ENCODE measurements at regions of chr13 and their contacts with region 1.

Region 1: GRCh38 chr13:97109841-97110492 is 112.2 kb upstream of the MBNL2 start:
- DNase-seq: peak; percentile 92 to 93 (median 93)
- ATAC-seq: peak; percentile 99 to 100 (median 100)
- H3K4me3 ChIP-seq: no peak overlapping the region
- H3K27ac ChIP-seq: no peak overlapping the region
- H3K4me1 ChIP-seq: peaks cover 0 to 7% (median 0%) of the 10 kb centered on the region in 4 donors
- H3K27me3 ChIP-seq: no peaks in the 10 kb centered on the region
- CTCF ChIP-seq: peak; percentile 98 to 100 (median 99)
- POLR2A ChIP-seq: no peak

Region 2: GRCh38 chr13:96279904-96280303 is 830.1 kb before region 1 on chr13:
- intact Hi-C with region 1: no loop called
- DNase-seq: no peak
- ATAC-seq: no peak
- H3K4me3 ChIP-seq: no peak overlapping the region
- H3K27ac ChIP-seq: no peak overlapping the region
- H3K4me1 ChIP-seq: no peaks in the 10 kb centered on the region
- H3K27me3 ChIP-seq: no peaks in the 10 kb centered on the region
- CTCF ChIP-seq: no peak
- POLR2A ChIP-seq: no peak

Region 3: DNA sequence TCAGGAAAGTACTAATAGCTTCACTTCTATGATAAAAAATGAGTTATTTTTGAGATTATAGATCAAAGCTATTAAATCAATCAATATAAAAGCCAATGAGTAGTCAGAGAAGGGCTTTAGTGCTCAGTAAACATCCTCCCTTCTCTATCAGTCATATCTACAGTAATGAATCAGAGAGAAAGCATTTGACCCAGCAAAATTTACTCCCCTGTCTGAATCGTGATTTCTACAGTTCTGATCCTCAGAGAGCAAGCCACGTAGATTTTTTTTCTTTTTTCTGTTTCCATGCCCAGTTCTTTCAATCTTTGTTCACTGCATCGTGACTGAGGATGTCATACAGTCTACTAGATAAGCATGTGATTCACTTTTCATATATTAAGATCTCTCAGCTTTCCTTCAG is 96.0 kb after region 1 on chr13:
- intact Hi-C with region 1: loop called in 1 of 2 experiments (anchors 10 kb)
- DNase-seq: no peak
- ATAC-seq: peak in 1 of 4 donors; percentile 33
- H3K4me3 ChIP-seq: no peak overlapping the region
- H3K27ac ChIP-seq: no peak overlapping the region
- H3K4me1 ChIP-seq: no peaks in the 10 kb centered on the region
- H3K27me3 ChIP-seq: no peaks in the 10 kb centered on the region
- CTCF ChIP-seq: no peak
- POLR2A ChIP-seq: no peak

Region 4: GRCh38 chr13:97344265-97345175 is 234.6 kb after region 1 on chr13:
- intact Hi-C with region 1: loop called in 1 of 2 experiments (anchors 10 kb)
- DNase-seq: peak in 2 of 3 donors; percentile 62 to 68
- ATAC-seq: peak; percentile 48 to 83 (median 78)
- H3K4me3 ChIP-seq: no peak overlapping the region
- H3K27ac ChIP-seq: peak overlapping the region in 2 of 3 donors; percentile 19 to 47
- H3K4me1 ChIP-seq: peaks cover 0 to 37% (median 3%) of the 10 kb centered on the region in 4 donors
- H3K27me3 ChIP-seq: no peaks in the 10 kb centered on the region
- CTCF ChIP-seq: peak; percentile 54 to 76 (median 68)
- POLR2A ChIP-seq: no peak

Region 5: DNA sequence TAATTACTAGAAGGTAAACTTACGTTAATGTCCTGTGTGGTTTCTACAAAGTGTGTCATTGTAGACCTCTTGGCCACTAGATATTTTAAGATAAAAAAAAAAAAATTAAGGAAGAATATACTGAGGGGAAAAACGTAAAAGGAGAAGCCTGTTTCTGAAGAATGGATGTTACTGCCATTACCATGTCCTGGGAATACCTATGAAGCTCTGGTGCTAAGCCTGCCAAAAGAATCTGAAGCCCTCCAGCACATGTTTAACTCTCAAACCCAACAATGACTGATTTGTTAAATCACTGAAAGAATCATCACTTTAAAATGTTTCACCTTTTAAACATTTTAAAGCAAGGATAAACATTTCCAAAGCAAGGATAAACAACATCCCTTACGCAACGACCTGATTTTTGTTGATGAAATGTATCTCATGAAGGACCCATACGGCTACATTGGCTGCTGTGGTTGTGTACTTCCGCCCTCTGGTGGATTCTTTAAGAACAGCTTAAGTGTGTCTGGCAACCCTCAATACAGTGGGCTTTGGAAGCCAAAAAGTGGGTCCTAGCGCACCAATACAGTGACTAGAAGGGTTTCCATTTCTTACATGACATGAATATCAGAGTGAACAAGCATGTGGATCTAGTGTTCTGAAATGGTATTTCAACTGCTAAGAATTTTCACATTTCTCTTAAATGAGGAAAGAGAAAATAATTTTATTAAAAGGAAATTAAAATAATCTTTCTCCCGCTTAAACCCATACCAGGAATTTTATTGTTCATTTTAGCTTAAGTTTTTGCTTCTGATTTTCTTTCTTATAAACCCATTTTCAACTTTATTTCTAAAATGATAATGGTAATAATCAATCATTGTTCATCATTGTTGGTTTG is 249.5 kb after region 1 on chr13:
- intact Hi-C with region 1: loop called (anchors 10 kb)
- DNase-seq: no peak
- ATAC-seq: peak; percentile 84 to 95 (median 94)
- H3K4me3 ChIP-seq: no peak overlapping the region
- H3K27ac ChIP-seq: peak overlapping the region in 2 of 3 donors; percentile 34 to 47
- H3K4me1 ChIP-seq: peaks cover 0 to 30% (median 4%) of the 10 kb centered on the region in 4 donors
- H3K27me3 ChIP-seq: no peaks in the 10 kb centered on the region
- CTCF ChIP-seq: peak; percentile 81 to 92 (median 87)
- POLR2A ChIP-seq: no peak